MCF 10A (cell line): ENCODE measurements at regions of chr12 and their contacts with region 1.

Region 1: GRCh38 chr12:53770281-53770680 is 18.5 kb upstream of the CISTR start:
- DNase-seq: peak; percentile 61
- H3K4me3 Mint-ChIP-seq: peak overlapping the region; percentile 0
- H3K27ac Mint-ChIP-seq: peak overlapping the region; percentile 6
- H3K4me1 Mint-ChIP-seq: peaks cover 25% of the 10 kb centered on the region
- H3K27me3 Mint-ChIP-seq: no peaks in the 10 kb centered on the region
- CTCF ChIP-seq: no peak

Region 2: GRCh38 chr12:53952871-53953734 is 182.8 kb after region 1 on chr12:
- CTCF ChIA-PET with region 1: interaction called, 3 read pairs
- POLR2A ChIA-PET with region 1: interaction called, 3 read pairs
- intact Hi-C with region 1: loop called (anchors 1 kb)
- DNase-seq: peak; percentile 12
- H3K4me3 Mint-ChIP-seq: peak overlapping the region; percentile 49
- H3K27ac Mint-ChIP-seq: no peak overlapping the region
- H3K4me1 Mint-ChIP-seq: no peaks in the 10 kb centered on the region
- H3K27me3 Mint-ChIP-seq: no peaks in the 10 kb centered on the region
- CTCF ChIP-seq: no peak

Region 3: GRCh38 chr12:53974084-53975063 is 204.1 kb after region 1 on chr12 and contains the start of gene HOTAIR:
- CTCF ChIA-PET with region 1: interaction called, 3 read pairs
- POLR2A ChIA-PET with region 1: no interaction called
- intact Hi-C with region 1: loop called (anchors 1 kb)
- DNase-seq: peak; percentile 60
- H3K4me3 Mint-ChIP-seq: peak within 1 kb of the TSS; percentile 88
- H3K27ac Mint-ChIP-seq: peak within 1 kb of the TSS; percentile 88
- H3K4me1 Mint-ChIP-seq: peaks cover 19% of the 10 kb centered on the region
- H3K27me3 Mint-ChIP-seq: no peaks in the 10 kb centered on the region
- CTCF ChIP-seq: no peak
- total RNA-seq, gene HOTAIR: 1.5 and 2.0 TPM in 2 replicates

Region 4: GRCh38 chr12:53991077-53991460 is 220.8 kb after region 1 on chr12:
- CTCF ChIA-PET with region 1: interaction called, 27 read pairs
- POLR2A ChIA-PET with region 1: interaction called, 4 read pairs
- intact Hi-C with region 1: loop called (anchors 1 kb)
- DNase-seq: no peak
- H3K4me3 Mint-ChIP-seq: no peak overlapping the region
- H3K27ac Mint-ChIP-seq: no peak overlapping the region
- H3K4me1 Mint-ChIP-seq: peaks cover 24% of the 10 kb centered on the region
- H3K27me3 Mint-ChIP-seq: peaks cover 7% of the 10 kb centered on the region
- CTCF ChIP-seq: no peak